OCI-LY7 (cell line): ENCODE measurements at regions of chr19 and their contacts with region 1.

Region 1: GRCh38 chr19:42283143-42284065 is 14.4 kb downstream of the CIC start:
- DNase-seq: peak; percentile 97
- H3K4me3 ChIP-seq: peak overlapping the region; percentile 69
- H3K27ac ChIP-seq: peak overlapping the region; percentile 82
- H3K4me1 ChIP-seq: peaks cover 59% of the 10 kb centered on the region
- CTCF ChIP-seq: peak; percentile 33; the same call in 1 of the 2 replicates

Region 2: GRCh38 chr19:41859618-41860418 is 423.6 kb before region 1 on chr19 and contains the start of gene RPS19:
- CTCF ChIA-PET with region 1: no interaction called
- POLR2A ChIA-PET with region 1: no interaction called
- intact Hi-C with region 1: loop called (anchors 10 kb)
- DNase-seq: peak; percentile 98
- H3K4me3 ChIP-seq: peak within 1 kb of the TSS; percentile 96
- H3K27ac ChIP-seq: peak within 1 kb of the TSS; percentile 85
- H3K4me1 ChIP-seq: peaks cover 61% of the 10 kb centered on the region
- CTCF ChIP-seq: peak; percentile 54; the same call in 1 of the 2 replicates
- total RNA-seq, gene RPS19: 4,018 and 4,414 TPM in 2 replicates

Region 3: DNA sequence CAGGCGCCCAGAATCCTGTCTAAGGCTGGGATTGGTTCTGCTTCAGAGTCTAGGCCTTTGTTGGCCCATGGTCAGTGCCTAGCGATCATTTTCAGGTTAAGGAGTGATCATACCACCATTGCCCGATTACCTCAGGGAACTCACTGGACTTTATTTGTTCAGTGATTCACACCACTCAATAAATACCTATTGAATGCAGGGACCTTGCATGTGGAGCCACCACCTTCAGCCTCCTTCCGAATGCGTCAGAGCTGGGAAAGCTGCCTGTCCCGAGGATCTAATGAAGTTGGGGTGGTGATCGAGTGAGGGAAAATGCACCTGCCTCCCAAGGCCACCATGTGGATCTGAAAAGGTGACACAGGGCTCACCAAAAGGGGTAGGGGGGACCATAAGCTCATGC is 111.1 kb before region 1 on chr19:
- CTCF ChIA-PET with region 1: no interaction called
- POLR2A ChIA-PET with region 1: no interaction called
- intact Hi-C with region 1: no loop called
- DNase-seq: no peak
- H3K4me3 ChIP-seq: no peak overlapping the region
- H3K27ac ChIP-seq: no peak overlapping the region
- H3K4me1 ChIP-seq: peaks cover 10% of the 10 kb centered on the region
- CTCF ChIP-seq: no peak

Region 4: GRCh38 chr19:42244347-42245220 is 38.8 kb before region 1 on chr19:
- CTCF ChIA-PET with region 1: interaction called, 6 read pairs
- POLR2A ChIA-PET with region 1: interaction called, 9 read pairs
- intact Hi-C with region 1: loop called (anchors 1 kb)
- DNase-seq: peak; percentile 96
- H3K4me3 ChIP-seq: peak overlapping the region; percentile 92
- H3K27ac ChIP-seq: peak overlapping the region; percentile 77
- H3K4me1 ChIP-seq: peaks cover 33% of the 10 kb centered on the region
- CTCF ChIP-seq: peak; percentile 81

Region 5: DNA sequence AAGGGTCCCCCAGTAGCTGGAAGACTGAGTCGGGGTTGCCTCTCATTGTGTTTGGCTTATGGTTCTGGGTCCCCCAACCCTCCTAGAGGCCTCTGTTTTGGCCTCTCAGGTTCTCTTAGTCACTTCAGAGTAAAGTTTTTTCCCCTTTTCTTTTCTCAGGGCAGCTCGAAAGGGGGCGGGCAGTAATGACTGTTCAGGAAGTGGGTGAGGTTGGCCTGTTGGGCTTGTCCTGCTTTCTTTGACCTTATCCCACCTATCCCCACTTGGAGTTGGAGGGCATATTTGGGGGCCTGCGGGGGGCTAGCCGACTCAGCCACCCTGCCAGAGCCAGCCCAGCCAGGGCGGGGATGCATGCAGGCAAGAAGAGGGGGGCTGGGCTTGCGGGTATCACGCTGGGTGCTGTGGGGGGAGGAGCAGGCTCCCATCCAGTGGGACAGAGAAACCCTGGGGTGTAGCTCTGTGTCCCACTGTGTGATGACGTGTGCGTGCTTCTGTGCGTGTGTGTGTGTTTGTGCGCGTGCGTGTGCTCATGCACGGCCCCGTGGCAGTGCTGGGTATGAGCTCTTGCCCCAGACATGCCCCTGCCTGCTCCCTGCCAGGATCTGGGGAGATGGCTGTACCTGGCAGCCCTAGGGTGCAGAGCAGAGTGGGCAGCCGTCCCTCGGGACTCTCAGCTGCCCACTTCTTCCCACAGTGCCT is 12.9 kb before region 1 on chr19:
- CTCF ChIA-PET with region 1: interaction called, 10 read pairs
- POLR2A ChIA-PET with region 1: interaction called, 11 read pairs
- intact Hi-C with region 1: no loop called
- DNase-seq: peak; percentile 37
- H3K4me3 ChIP-seq: peak overlapping the region; percentile 73
- H3K27ac ChIP-seq: peak overlapping the region; percentile 70
- H3K4me1 ChIP-seq: peaks cover 32% of the 10 kb centered on the region
- CTCF ChIP-seq: no peak

Region 6: GRCh38 chr19:42301656-42302203 is 18.3 kb after region 1 on chr19 and contains the start of gene PRR19:
- CTCF ChIA-PET with region 1: no interaction called
- POLR2A ChIA-PET with region 1: interaction called, 5 read pairs
- intact Hi-C with region 1: loop called (anchors 1 kb)
- DNase-seq: peak; percentile 50
- H3K4me3 ChIP-seq: peak within 1 kb of the TSS; percentile 88
- H3K27ac ChIP-seq: peak within 1 kb of the TSS; percentile 49
- H3K4me1 ChIP-seq: peaks cover 15% of the 10 kb centered on the region
- CTCF ChIP-seq: no peak
- total RNA-seq, gene PRR19: 1.4 TPM in 1 of 2 replicates, not detected in the other